Common myeloid progenitor, CD34-positive (primary cell): ENCODE measurements at regions of chr1 and their contacts with region 1.

Region 1: GRCh38 chr1:211133836-211134669 is at the start of gene KCNH1:
- DNase-seq: peak; percentile 85 to 93 (median 92)
- H3K4me3 ChIP-seq: peak within 1 kb of the TSS in 5 of 7 experiments; percentile 21 to 73 (median 39)
- H3K27ac ChIP-seq: no peak within 1 kb of the TSS
- H3K4me1 ChIP-seq: peaks cover 0 to 16% (median 14%) of the 10 kb centered on the region in 4 experiments
- H3K27me3 ChIP-seq: peaks cover 14 to 56% (median 26%) of the 10 kb centered on the region in 5 experiments

Region 2: DNA sequence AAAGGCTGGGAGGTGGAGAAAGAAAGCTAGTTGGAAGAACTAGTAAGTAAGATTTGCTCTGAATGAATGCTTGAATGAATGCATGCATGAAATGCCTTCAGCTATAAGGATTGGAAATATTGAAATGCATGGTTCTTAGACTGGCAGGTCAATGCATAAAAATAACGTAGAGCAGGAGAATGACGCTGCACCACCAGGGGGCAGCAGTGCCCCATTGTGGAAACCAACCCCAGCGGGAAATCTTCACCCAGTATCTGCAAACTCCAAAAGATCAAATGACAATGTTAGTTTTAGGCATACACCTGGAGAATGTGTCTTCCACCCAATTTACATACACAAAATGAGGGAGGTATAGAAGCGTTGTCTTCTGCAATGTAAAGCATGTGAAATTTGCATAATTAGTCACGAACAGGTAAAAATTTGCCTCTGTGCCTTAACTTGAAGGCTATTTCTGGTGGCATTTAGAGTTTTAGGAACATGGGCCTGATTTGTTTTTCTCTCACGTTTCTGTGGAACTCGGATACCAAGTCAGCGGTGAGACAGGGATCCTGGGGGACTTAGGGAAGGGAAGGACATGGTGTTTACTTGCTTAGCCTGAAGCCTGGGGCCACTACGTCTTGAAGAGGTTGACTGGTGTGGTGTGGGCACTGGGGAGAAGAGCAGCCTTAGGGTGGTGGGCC is 726.7 kb before region 1 on chr1:
- CTCF ChIA-PET with region 1: interaction called, 26 read pairs
- POLR2A ChIA-PET with region 1: no interaction called
- DNase-seq: peak; percentile 54 to 78 (median 66)
- H3K4me3 ChIP-seq: no peak overlapping the region
- H3K27ac ChIP-seq: no peak overlapping the region
- H3K4me1 ChIP-seq: no peaks in the 10 kb centered on the region
- H3K27me3 ChIP-seq: no peaks in the 10 kb centered on the region

Region 3: GRCh38 chr1:210448297-210448892 is 685.7 kb before region 1 on chr1:
- CTCF ChIA-PET with region 1: interaction called, 101 read pairs
- POLR2A ChIA-PET with region 1: no interaction called
- DNase-seq: peak; percentile 61 to 81 (median 70)
- H3K4me3 ChIP-seq: no peak overlapping the region
- H3K27ac ChIP-seq: no peak overlapping the region
- H3K4me1 ChIP-seq: no peaks in the 10 kb centered on the region
- H3K27me3 ChIP-seq: no peaks in the 10 kb centered on the region

Region 4: DNA sequence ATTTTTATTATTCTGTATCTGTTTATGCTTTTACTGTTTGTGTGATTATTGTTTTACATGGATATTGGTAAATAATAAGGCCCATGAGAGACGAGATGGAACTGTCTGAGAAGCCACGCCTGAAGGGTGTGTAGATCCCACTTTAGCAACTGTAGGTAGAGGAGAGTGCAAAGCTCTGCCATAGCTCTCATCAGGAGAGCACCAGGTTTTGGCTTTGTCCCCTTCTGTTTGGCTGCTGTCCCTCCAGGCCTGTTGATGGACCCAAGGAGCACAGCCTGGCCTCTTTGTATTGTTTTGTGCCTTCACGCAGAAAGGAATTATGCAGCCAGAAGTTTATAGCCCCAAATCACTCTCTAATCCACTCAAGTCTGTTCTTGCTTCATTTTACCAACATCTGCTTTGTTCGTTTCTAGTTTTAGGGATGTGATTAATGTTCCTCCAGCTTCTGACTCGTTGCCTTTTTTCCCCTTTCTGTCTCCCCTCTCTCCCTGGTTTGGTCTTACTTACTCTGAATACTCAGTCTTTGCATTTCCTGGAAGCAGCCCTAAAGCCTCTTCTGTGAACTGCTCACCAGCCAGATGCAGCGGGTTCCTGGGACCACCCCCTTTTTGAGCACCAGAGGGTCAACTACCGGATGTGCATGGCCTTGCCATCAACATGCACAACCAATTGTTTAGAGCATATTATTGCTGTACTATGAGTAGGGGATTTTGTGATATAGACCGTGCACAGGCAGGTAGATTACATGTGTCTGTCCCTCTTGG is 678.0 kb before region 1 on chr1:
- CTCF ChIA-PET with region 1: interaction called, 101 read pairs
- POLR2A ChIA-PET with region 1: no interaction called
- DNase-seq: no peak
- H3K4me3 ChIP-seq: no peak overlapping the region
- H3K27ac ChIP-seq: no peak overlapping the region
- H3K4me1 ChIP-seq: no peaks in the 10 kb centered on the region
- H3K27me3 ChIP-seq: no peaks in the 10 kb centered on the region

Region 5: GRCh38 chr1:210584439-210585113 is 549.5 kb before region 1 on chr1:
- CTCF ChIA-PET with region 1: interaction called, 93 read pairs
- POLR2A ChIA-PET with region 1: interaction called, 4 read pairs
- DNase-seq: peak; percentile 87 to 95 (median 93)
- H3K4me3 ChIP-seq: no peak overlapping the region
- H3K27ac ChIP-seq: no peak overlapping the region
- H3K4me1 ChIP-seq: peaks cover 10 to 27% (median 19%) of the 10 kb centered on the region in 4 experiments
- H3K27me3 ChIP-seq: no peaks in the 10 kb centered on the region

Region 6: GRCh38 chr1:211145944-211146343 is 11.9 kb after region 1 on chr1:
- CTCF ChIA-PET with region 1: interaction called, 11 read pairs
- POLR2A ChIA-PET with region 1: no interaction called
- DNase-seq: no peak
- H3K4me3 ChIP-seq: no peak overlapping the region
- H3K27ac ChIP-seq: no peak overlapping the region
- H3K4me1 ChIP-seq: no peaks in the 10 kb centered on the region
- H3K27me3 ChIP-seq: peaks cover 0 to 3% (median 0%) of the 10 kb centered on the region in 5 experiments

Region 7: DNA sequence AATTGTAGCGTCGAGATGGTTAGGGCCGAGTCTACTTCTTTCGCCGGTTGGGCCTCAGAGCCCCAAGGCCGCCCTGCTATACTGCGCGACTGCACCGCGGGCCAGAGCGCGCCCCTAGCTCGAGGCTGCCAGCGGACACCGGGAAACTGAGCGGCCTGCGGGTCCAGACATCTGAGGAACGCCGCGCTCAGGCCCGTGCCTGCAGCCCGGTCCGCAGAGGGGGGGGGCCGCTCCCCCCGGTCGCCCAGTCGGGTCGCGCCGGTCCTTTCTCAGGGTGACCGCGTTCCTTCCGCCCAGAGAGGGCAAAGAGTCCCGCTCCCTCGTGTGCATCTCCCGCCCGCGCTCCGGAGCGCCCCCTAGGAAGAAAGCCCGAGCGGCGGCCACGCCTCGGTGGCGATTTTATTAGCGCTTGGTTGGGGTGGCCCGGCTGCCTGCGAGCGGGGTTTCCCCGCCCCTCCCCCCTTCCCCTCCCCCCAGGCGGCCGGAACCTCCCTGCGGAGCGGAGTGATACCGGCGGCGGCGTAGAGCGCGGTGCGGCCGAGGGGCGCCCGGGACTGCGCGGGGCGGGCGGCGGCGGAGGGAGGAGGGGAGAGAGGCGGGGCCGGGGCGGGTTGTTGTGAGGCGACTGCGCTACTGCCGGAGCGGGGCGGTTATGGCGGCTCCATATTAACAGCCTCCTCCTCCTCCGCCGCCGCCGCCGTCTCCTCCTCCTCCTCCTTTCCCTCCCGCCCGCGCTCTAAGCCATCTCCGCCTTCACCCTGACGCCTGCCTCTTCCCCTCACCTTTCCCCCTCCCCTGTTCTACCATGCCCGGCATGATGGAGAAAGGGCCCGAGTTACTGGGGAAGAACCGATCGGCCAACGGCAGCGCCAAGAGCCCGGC is 124.9 kb after region 1 on chr1 and contains the start of gene RCOR3:
- CTCF ChIA-PET with region 1: interaction called, 14 read pairs
- POLR2A ChIA-PET with region 1: no interaction called
- DNase-seq: peak; percentile 91 to 96 (median 92)
- H3K4me3 ChIP-seq: peak within 1 kb of the TSS; percentile 85 to 94 (median 87)
- H3K27ac ChIP-seq: peak within 1 kb of the TSS; percentile 82 to 96
- H3K4me1 ChIP-seq: peaks cover 8 to 28% (median 25%) of the 10 kb centered on the region in 4 experiments
- H3K27me3 ChIP-seq: no peaks in the 10 kb centered on the region